ENCODE measurements at regions of chr3 and their contacts with region 1.

Region 1: GRCh38 chr3:133943639-133944141 is 48.0 kb upstream of the RAB6B start:
- DNase-seq: peak; percentile 78 to 92
- H3K4me3 ChIP-seq: no peak overlapping the region
- H3K27ac ChIP-seq: no peak overlapping the region
- H3K4me1 ChIP-seq: peaks cover 30% of the 10 kb centered on the region
- H3K27me3 ChIP-seq: peaks cover 62% of the 10 kb centered on the region
- CTCF ChIP-seq: no peak

Region 2: DNA sequence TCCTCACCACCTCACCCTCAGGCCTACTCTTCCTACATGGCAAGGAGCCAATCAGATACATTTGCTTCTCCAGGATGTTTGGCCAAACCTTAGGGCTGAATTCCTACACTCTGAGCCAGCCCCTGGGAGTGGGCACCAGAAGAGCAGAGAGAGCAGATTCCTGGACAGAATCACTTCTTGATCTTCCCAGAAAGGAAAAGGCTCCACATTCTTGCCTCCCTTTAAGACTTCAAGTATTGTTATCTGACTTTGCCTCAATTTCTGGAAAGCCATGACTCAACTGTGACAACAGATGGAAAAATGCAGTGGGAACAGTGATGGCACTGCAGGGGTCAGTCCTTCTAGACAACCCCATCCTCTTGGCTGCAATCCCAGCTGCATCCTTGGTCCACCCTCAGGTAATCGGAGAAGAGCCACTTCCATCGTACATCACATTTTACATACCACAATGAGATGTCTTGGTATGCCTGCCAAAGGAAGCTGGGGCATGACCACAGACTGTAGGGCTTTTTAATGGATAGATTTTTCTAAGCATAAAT is 65.0 kb after region 1 on chr3:
- CTCF ChIA-PET with region 1: no interaction called
- POLR2A ChIA-PET with region 1: no interaction called
- intact Hi-C with region 1: loop called (anchors 1 kb)
- DNase-seq: peak; percentile 70 to 72
- H3K4me3 ChIP-seq: no peak overlapping the region
- H3K27ac ChIP-seq: peak overlapping the region; percentile 37; the same call in 1 of the 2 replicates
- H3K4me1 ChIP-seq: peaks cover 22% of the 10 kb centered on the region
- H3K27me3 ChIP-seq: no peaks in the 10 kb centered on the region
- CTCF ChIP-seq: no peak

Region 3: DNA sequence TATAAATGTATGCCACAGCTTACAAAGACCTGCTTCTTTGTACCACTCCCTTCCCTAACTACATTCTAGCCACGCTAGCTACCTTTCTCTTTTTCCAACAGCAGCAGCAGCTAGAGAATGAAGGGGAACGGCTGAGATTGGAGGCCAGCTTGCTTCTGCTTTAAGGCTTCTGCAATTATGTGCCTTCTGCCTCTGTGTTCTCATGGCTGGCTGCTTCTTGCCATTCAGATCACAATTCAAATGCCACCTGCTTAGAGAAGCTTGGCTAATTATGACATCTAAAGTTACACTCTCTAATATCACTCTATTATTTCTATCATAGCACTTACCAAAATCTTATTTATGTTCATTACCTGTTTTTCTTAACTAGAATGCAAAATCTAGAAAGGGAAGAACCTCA is 211.8 kb after region 1 on chr3:
- CTCF ChIA-PET with region 1: no interaction called
- POLR2A ChIA-PET with region 1: no interaction called
- intact Hi-C with region 1: loop called (anchors 5 kb)
- DNase-seq: no peak
- H3K4me3 ChIP-seq: no peak overlapping the region
- H3K27ac ChIP-seq: no peak overlapping the region
- H3K4me1 ChIP-seq: no peaks in the 10 kb centered on the region
- H3K27me3 ChIP-seq: no peaks in the 10 kb centered on the region
- CTCF ChIP-seq: no peak